Activated T-helper 2 cell treated with anti-CD3 and anti-CD28 coated beads, Interferon-gamma antibody, Interleukin-2, Interleukin-4, amounts not matched to agents 10 μg/mL and 5 μg/mL and 100 μg/mL, durations not matched to agents 14 hours and 24 hours and 36 hours (primary cell): ENCODE measurements at regions of chr9 and their contacts with region 1.

Region 1: DNA sequence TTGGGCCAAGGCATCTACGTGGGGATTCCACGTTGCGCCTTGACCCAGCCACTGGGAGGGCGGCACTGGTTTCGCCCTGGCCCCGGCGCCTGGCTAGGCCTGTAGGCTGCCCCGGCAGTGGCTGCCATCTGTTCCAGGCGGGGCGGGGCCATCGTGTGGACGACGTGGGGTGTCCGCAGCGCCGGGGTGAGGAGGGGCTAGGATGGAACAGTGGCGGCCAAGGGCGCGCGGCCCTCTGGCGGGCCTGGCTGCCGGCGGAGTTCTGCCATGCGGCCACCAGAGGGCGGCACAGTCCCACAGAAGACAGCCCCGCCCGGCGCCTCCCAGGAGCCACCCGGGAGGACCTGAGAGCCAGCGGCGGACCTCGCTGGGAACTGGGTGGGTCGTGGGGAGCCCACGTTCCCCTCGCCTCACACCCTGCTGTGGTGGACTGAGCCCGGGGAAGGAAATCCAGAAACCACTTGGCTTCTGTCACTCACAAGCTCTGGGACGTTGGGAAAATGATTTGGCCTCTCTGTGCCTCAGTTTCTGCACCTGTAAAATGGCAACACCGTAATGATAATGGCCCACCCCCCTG is 22.6 kb upstream of the RAPGEF1 start:
- DNase-seq: peak; percentile 68
- H3K4me3 Mint-ChIP-seq: no peak overlapping the region
- H3K27ac Mint-ChIP-seq: no peak overlapping the region
- H3K4me1 Mint-ChIP-seq: peaks cover 11% of the 10 kb centered on the region
- H3K27me3 Mint-ChIP-seq: peaks cover 28% of the 10 kb centered on the region

Region 2: GRCh38 chr9:131578731-131579504 is 183.5 kb before region 1 on chr9:
- intact Hi-C with region 1: no loop called
- DNase-seq: peak; percentile 28
- H3K4me3 Mint-ChIP-seq: peak overlapping the region; percentile 26
- H3K27ac Mint-ChIP-seq: peak overlapping the region; percentile 86
- H3K4me1 Mint-ChIP-seq: peaks cover 14% of the 10 kb centered on the region
- H3K27me3 Mint-ChIP-seq: no peaks in the 10 kb centered on the region

Region 3: DNA sequence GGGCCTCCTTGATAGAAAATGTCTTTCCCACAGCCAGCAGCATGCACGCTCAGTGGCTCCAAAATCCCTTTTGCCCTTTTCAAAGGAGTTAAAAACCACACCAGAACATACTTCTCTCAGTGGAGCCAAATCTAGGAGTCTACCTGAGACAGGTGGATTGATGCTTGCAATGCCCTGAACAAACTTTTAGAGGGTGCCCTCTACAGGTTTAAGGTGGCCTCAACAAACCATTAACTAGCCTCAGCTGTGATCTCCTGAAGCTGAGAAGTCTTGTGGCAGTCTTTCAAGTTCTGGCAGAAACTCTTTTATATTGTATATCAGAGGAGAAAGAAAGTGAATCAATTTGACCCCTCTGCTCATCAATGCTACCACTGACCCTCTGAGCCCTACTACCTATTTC is 191.9 kb after region 1 on chr9:
- intact Hi-C with region 1: loop called (anchors 10 kb)
- DNase-seq: no peak
- H3K4me3 Mint-ChIP-seq: no peak overlapping the region
- H3K27ac Mint-ChIP-seq: no peak overlapping the region
- H3K4me1 Mint-ChIP-seq: no peaks in the 10 kb centered on the region
- H3K27me3 Mint-ChIP-seq: no peaks in the 10 kb centered on the region

Region 4: DNA sequence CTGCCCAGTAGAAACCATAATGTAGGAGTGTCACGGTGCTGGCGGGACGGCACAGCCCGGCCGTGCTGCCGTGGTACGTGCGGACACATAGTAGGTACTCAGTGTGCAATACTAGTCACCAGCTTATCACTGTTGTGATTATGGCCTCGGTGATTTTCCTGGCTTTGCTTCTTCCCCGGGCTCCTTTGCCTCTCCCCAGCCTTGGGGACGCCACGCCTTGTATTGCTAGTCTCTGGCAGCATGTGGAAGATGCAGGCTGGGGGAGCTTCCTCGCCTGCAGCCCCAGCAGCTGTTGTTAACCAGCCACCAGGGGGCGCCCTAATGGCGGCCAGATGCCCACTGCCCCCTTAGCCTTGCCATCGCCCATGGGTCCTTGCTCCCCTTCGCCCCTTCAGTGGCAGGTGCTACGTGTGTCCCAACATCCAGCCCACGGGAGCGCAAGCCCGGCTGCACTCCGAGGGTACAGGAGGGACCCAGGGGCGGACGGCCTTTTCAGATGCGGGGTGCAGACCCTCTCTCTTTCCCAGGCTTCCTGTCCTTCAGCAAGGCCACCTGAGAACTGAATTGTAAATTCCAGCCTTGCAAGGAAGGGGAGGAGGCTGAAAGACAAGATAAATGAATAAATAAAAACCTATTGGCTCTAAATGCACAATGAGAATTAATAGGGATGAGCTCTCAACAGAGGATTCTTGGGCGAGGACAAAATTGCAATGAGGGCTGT is 407.4 kb after region 1 on chr9:
- intact Hi-C with region 1: loop called (anchors 10 kb)
- DNase-seq: peak; percentile 34
- H3K4me3 Mint-ChIP-seq: no peak overlapping the region
- H3K27ac Mint-ChIP-seq: no peak overlapping the region
- H3K4me1 Mint-ChIP-seq: peaks cover under 1% of the 10 kb centered on the region
- H3K27me3 Mint-ChIP-seq: peaks cover 21% of the 10 kb centered on the region

Region 5: GRCh38 chr9:132240753-132241493 is 478.5 kb after region 1 on chr9:
- intact Hi-C with region 1: loop called (anchors 2 kb)
- DNase-seq: peak; percentile 98
- H3K4me3 Mint-ChIP-seq: peak overlapping the region; percentile 92
- H3K27ac Mint-ChIP-seq: peak overlapping the region; percentile 75
- H3K4me1 Mint-ChIP-seq: peaks cover 6% of the 10 kb centered on the region
- H3K27me3 Mint-ChIP-seq: peaks cover 30% of the 10 kb centered on the region

Region 6: DNA sequence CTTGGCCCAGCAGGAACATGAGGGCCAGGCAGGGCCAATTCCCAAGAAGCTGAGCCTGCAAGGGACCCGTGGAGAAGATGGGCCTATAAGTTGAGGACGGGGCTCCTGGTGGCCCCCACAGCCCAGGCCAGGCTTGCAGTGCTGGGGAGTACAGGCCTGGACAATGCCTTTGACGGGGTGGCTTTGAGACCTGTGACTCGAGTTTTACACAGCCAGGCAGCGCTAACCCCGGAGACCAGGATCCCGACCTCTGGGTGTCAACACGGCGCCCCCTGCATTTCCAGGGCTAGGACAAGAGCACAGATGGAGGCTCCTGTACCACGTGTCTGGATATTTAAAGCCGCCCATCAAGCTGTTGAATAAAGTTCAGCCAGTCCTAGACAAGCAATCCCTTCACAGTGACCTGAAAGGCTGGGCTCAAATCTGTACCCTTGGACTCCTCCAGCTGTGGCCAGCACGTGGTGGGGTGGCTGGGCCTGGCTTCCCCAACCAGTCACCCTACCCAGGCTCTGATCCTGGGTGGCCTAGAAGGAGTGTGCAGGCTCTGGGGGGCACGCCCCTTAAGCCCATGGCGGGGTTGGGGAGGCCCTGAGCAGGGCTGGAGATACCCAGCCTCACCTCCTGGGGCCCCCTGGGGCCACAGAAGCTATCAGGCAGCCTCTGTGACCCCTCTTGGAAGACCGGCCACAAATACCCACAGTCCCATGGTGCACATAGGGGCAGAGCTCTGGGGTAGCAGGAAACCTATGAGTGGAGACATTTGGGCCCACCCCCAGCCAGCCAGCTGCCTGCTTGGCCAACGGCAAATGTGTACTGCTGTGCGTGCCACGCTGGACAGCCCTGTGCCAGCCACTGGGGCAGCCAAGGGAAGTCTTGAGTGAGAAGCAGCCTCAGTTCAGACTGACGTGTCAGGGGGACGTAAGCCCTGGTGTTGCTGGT is 488.1 kb after region 1 on chr9:
- intact Hi-C with region 1: loop called (anchors 5 kb)
- DNase-seq: no peak
- H3K4me3 Mint-ChIP-seq: no peak overlapping the region
- H3K27ac Mint-ChIP-seq: no peak overlapping the region
- H3K4me1 Mint-ChIP-seq: no peaks in the 10 kb centered on the region
- H3K27me3 Mint-ChIP-seq: peaks cover 11% of the 10 kb centered on the region